ENCODE measurements at regions of chr22 and their contacts with region 1.

Region 1: GRCh38 chr22:35299673-35300497 is at the start of gene TOM1:
- DNase-seq: peak; percentile 98 to 99 (median 98)
- H3K4me3 ChIP-seq: peak within 1 kb of the TSS; percentile 85 to 100 (median 89)
- H3K4me3 Mint-ChIP-seq: peak within 1 kb of the TSS; percentile 82 to 88
- H3K27ac ChIP-seq: peak within 1 kb of the TSS; percentile 99 to 100
- H3K27ac Mint-ChIP-seq: peak within 1 kb of the TSS; percentile 98 to 99 (median 98)
- H3K4me1 ChIP-seq: peaks cover 40 to 51% of the 10 kb centered on the region in 2 donors
- H3K4me1 Mint-ChIP-seq: peaks cover 26% of the 10 kb centered on the region
- H3K27me3 ChIP-seq: no peaks in the 10 kb centered on the region
- H3K27me3 Mint-ChIP-seq: peaks cover 0 to 3% (median 0%) of the 10 kb centered on the region in 3 donors
- CTCF ChIP-seq: no peak
- polyA plus RNA-seq, gene TOM1: 80.5 to 167 (median 120) TPM

Region 2: DNA sequence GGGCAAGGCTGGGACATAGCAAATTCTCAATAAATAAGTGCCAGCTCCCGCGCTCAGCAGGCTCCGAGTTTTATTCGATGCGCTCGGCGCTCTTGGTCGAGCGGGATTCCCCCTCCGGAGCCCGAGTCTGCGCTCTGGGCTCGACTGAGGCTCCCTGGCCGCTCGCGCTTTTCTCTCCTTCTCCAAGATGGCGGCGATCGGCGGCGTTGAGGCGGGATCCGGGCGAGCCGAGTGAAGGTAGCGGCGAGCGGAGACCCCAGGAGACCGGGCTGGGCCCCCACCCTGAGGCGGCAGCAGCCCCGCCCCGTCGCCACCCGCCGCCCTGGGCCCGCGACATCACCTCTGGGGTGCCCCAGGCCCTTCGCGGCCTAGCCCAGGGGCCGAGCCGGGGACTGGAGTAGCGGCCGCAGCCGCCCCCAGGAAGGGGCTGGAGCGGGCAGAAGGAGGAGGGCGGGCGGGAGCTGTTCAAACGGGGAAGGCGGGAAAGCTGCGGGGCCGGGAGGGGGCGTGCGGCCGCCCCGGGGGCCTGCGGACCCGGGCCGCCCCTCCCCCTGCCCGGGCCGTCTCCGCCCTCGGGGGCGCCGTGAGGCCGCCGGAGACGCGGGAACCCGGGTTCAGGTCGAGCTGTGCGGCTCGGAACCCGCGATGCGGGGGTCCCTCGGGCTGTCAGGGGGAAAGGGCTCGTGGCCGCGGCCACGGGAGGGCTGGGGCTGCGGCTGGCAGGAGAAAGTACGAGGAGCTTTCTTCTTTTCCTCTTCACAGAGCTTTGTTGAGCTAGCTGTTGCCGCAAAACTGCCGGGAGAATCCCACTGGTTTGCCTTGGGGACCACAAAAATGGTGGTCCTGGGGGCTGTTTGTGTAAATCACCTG is 42.3 kb before region 1 on chr22 and contains the start of gene HMGXB4:
- intact Hi-C with region 1: loop called in 1 of 2 experiments (anchors 2 kb)
- DNase-seq: peak; percentile 80 to 85 (median 84)
- H3K4me3 ChIP-seq: peak within 1 kb of the TSS; percentile 57 to 97 (median 81)
- H3K4me3 Mint-ChIP-seq: peak within 1 kb of the TSS; percentile 83 to 89
- H3K27ac ChIP-seq: peak within 1 kb of the TSS; percentile 40 to 86
- H3K27ac Mint-ChIP-seq: peak within 1 kb of the TSS; percentile 69 to 96 (median 90)
- H3K4me1 ChIP-seq: peaks cover 14 to 20% of the 10 kb centered on the region in 2 donors
- H3K4me1 Mint-ChIP-seq: peaks cover 19% of the 10 kb centered on the region
- H3K27me3 ChIP-seq: no peaks in the 10 kb centered on the region
- H3K27me3 Mint-ChIP-seq: peaks cover 0 to 5% (median 4%) of the 10 kb centered on the region in 3 donors
- CTCF ChIP-seq: peak; percentile 17
- polyA plus RNA-seq, gene HMGXB4: 6.3 to 11.4 (median 8.1) TPM

Region 3: GRCh38 chr22:35330258-35330861 is 30.5 kb after region 1 on chr22:
- intact Hi-C with region 1: loop called (anchors 1 to 5 kb)
- DNase-seq: peak; percentile 91 to 95 (median 95)
- H3K4me3 ChIP-seq: peak overlapping the region in 1 of 3 experiments; percentile 31
- H3K4me3 Mint-ChIP-seq: peak overlapping the region; percentile 56 to 71
- H3K27ac ChIP-seq: peak overlapping the region; percentile 92 to 97
- H3K27ac Mint-ChIP-seq: peak overlapping the region; percentile 98 to 100 (median 99)
- H3K4me1 ChIP-seq: peaks cover 49 to 50% of the 10 kb centered on the region in 2 donors
- H3K4me1 Mint-ChIP-seq: peaks cover 62% of the 10 kb centered on the region
- H3K27me3 ChIP-seq: no peaks in the 10 kb centered on the region
- H3K27me3 Mint-ChIP-seq: peaks cover 0 to 2% (median 1%) of the 10 kb centered on the region in 3 donors
- CTCF ChIP-seq: no peak

Region 4: GRCh38 chr22:35342390-35342789 is 42.5 kb after region 1 on chr22:
- intact Hi-C with region 1: no loop called
- DNase-seq: no peak
- H3K4me3 ChIP-seq: no peak overlapping the region
- H3K4me3 Mint-ChIP-seq: no peak overlapping the region
- H3K27ac ChIP-seq: no peak overlapping the region
- H3K27ac Mint-ChIP-seq: no peak overlapping the region
- H3K4me1 ChIP-seq: no peaks in the 10 kb centered on the region
- H3K4me1 Mint-ChIP-seq: no peaks in the 10 kb centered on the region
- H3K27me3 ChIP-seq: no peaks in the 10 kb centered on the region
- H3K27me3 Mint-ChIP-seq: peaks cover 0 to 4% (median under 1%) of the 10 kb centered on the region in 3 donors
- CTCF ChIP-seq: no peak

Region 5: GRCh38 chr22:35409783-35410662 is 110.1 kb after region 1 on chr22:
- intact Hi-C with region 1: loop called in 1 of 2 experiments (anchors 5 kb)
- DNase-seq: peak; percentile 94 to 98 (median 97)
- H3K4me3 ChIP-seq: peak overlapping the region in 1 of 3 experiments; percentile 49
- H3K4me3 Mint-ChIP-seq: peak overlapping the region; percentile 45 to 67
- H3K27ac ChIP-seq: peak overlapping the region; percentile 92
- H3K27ac Mint-ChIP-seq: peak overlapping the region; percentile 97 to 100 (median 98)
- H3K4me1 ChIP-seq: peaks cover 53 to 54% of the 10 kb centered on the region in 2 donors
- H3K4me1 Mint-ChIP-seq: peaks cover 56% of the 10 kb centered on the region
- H3K27me3 ChIP-seq: no peaks in the 10 kb centered on the region
- H3K27me3 Mint-ChIP-seq: peaks cover 0 to 2% (median 0%) of the 10 kb centered on the region in 3 donors
- CTCF ChIP-seq: no peak